Panc1 (cell line): ENCODE measurements at regions of chr10 and their contacts with region 1.

Region 1: DNA sequence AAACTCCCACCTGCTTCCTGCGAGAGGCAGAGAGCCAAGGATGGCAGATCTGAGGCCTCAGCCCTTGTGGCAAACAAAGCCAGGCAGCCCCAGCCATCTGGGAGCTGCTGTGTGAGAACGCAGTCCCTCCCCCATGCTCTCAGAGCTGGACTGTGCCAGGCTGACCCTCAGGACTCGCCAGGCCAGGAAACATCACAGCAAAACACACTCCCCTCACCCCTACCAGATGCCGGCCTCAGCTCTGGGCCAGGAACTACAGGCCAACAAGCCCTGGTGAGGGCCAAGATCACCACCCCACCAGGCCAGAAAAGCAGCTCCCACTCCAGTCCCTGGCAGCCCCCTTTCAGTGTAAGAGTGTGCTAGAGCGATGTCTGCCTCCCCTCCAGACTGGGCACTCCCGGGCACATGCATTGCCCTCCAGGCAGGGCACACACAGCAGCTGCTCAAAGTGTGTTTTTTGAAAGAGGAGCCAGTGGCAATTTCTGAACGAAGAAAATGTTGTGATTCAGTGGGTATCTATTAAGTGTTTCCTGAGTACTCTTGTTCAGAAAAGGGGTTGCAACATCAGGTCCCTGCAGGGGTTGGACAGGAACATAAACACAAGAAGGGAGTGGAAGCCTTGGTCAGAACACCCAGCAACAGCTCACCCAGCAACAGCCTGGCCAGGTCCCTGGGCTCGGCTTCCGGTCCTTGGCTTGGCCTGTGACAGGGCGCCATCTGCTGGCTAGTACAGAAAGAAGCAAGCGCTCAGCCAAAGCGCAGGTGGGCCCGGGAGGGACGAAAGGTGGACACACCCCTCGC is 18.3 kb downstream of the LRRC20 start:
- DNase-seq: no peak
- ATAC-seq: peak; percentile 98
- H3K4me3 ChIP-seq: peak overlapping the region in 1 of 2 experiments; percentile 39; a peak in 2 of 4 replicates
- H3K27ac ChIP-seq: peak overlapping the region; percentile 52
- H3K4me1 ChIP-seq: peaks cover 16% of the 10 kb centered on the region
- H3K27me3 ChIP-seq: no peaks in the 10 kb centered on the region
- CTCF ChIP-seq: peak; percentile 97

Region 2: GRCh38 chr10:70146489-70147258 is 217.5 kb before region 1 on chr10 and contains the start of gene TYSND1:
- CTCF ChIA-PET with region 1: interaction called, 17 read pairs
- POLR2A ChIA-PET with region 1: interaction called, 8 read pairs
- in situ Hi-C with region 1: no loop called
- intact Hi-C with region 1: no loop called
- DNase-seq: peak; percentile 93
- ATAC-seq: peak; percentile 87
- H3K4me3 ChIP-seq: peak within 1 kb of the TSS; percentile 69 to 85
- H3K27ac ChIP-seq: peak within 1 kb of the TSS; percentile 89
- H3K4me1 ChIP-seq: peaks cover 12% of the 10 kb centered on the region
- H3K27me3 ChIP-seq: no peaks in the 10 kb centered on the region
- CTCF ChIP-seq: peak; percentile 92
- total RNA-seq, gene TYSND1: 39.3 TPM

Region 3: DNA sequence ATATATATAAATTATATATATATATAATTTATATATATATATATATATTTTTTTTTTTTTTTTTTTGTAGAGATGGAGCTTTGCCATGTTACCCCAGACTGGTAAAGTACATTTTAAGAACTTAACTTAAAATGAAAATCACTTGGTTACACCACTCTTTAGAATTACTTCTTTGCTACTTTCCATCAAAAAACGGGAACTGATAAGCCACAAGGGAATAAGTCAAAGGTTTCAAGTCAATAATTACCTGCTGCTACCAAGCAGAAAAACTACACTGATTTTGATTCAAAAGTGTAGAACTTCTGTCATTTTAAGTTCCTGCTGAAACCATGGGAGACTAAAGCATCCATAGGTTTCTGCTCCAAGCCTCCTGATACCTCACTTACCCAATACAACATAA is 143.1 kb before region 1 on chr10:
- CTCF ChIA-PET with region 1: interaction called, 99 read pairs
- POLR2A ChIA-PET with region 1: no interaction called
- in situ Hi-C with region 1: no loop called
- intact Hi-C with region 1: loop called (anchors 2 kb)
- DNase-seq: no peak
- ATAC-seq: no peak
- H3K4me3 ChIP-seq: no peak overlapping the region
- H3K27ac ChIP-seq: 0 out of 2 replicates have a peak overlapping the region, but pooled peaks have one; percentile 5
- H3K4me1 ChIP-seq: peaks cover 5% of the 10 kb centered on the region
- H3K27me3 ChIP-seq: no peaks in the 10 kb centered on the region
- CTCF ChIP-seq: no peak

Region 4: GRCh38 chr10:70391654-70392053 is 27.5 kb after region 1 on chr10:
- CTCF ChIA-PET with region 1: interaction called, 13 read pairs
- POLR2A ChIA-PET with region 1: interaction called, 8 read pairs
- in situ Hi-C with region 1: no loop called
- intact Hi-C with region 1: no loop called
- DNase-seq: no peak
- ATAC-seq: no peak
- H3K4me3 ChIP-seq: no peak overlapping the region
- H3K27ac ChIP-seq: no peak overlapping the region
- H3K4me1 ChIP-seq: peaks cover 6% of the 10 kb centered on the region; the same call in 1 of the 2 replicates
- H3K27me3 ChIP-seq: no peaks in the 10 kb centered on the region; the same call in 1 of the 2 replicates
- CTCF ChIP-seq: no peak

Region 5: GRCh38 chr10:70412356-70412755 is 48.2 kb after region 1 on chr10:
- CTCF ChIA-PET with region 1: no interaction called
- POLR2A ChIA-PET with region 1: no interaction called
- in situ Hi-C with region 1: no loop called
- intact Hi-C with region 1: no loop called
- DNase-seq: no peak
- ATAC-seq: no peak
- H3K4me3 ChIP-seq: no peak overlapping the region
- H3K27ac ChIP-seq: no peak overlapping the region
- H3K4me1 ChIP-seq: 0 out of 2 replicates have a peak, but pooled peaks cover 5% of the 10 kb centered on the region
- H3K27me3 ChIP-seq: no peaks in the 10 kb centered on the region
- CTCF ChIP-seq: no peak

Region 6: GRCh38 chr10:70722820-70723424 is 358.8 kb after region 1 on chr10:
- CTCF ChIA-PET with region 1: no interaction called
- POLR2A ChIA-PET with region 1: no interaction called
- in situ Hi-C with region 1: no loop called
- intact Hi-C with region 1: no loop called
- DNase-seq: peak; percentile 36
- ATAC-seq: no peak
- H3K4me3 ChIP-seq: no peak overlapping the region
- H3K27ac ChIP-seq: no peak overlapping the region
- H3K4me1 ChIP-seq: no peaks in the 10 kb centered on the region
- H3K27me3 ChIP-seq: peaks cover 3% of the 10 kb centered on the region; the same call in 1 of the 2 replicates
- CTCF ChIP-seq: no peak